ENCODE measurements at regions of chr1 and their contacts with region 1.

Region 1: GRCh38 chr1:75991497-75992114 is 59.4 kb upstream of the ASB17 start:
- DNase-seq: peak; percentile 61
- H3K4me3 ChIP-seq: no peak overlapping the region
- H3K27ac ChIP-seq: no peak overlapping the region
- H3K27me3 ChIP-seq: no peaks in the 10 kb centered on the region
- CTCF ChIP-seq: peak; percentile 84

Region 2: GRCh38 chr1:75969550-75969949 is 22.1 kb before region 1 on chr1:
- CTCF ChIA-PET with region 1: no interaction called
- POLR2A ChIA-PET with region 1: no interaction called
- DNase-seq: no peak
- H3K4me3 ChIP-seq: no peak overlapping the region
- H3K27ac ChIP-seq: no peak overlapping the region
- H3K27me3 ChIP-seq: no peaks in the 10 kb centered on the region
- CTCF ChIP-seq: no peak

Region 3: GRCh38 chr1:76006234-76006633 is 14.6 kb after region 1 on chr1:
- CTCF ChIA-PET with region 1: interaction called, 18 read pairs
- POLR2A ChIA-PET with region 1: no interaction called
- DNase-seq: peak; percentile 49
- H3K4me3 ChIP-seq: no peak overlapping the region
- H3K27ac ChIP-seq: no peak overlapping the region
- H3K27me3 ChIP-seq: no peaks in the 10 kb centered on the region
- CTCF ChIP-seq: no peak

Measured in AG04450 (cell line).